CD4-positive, alpha-beta memory T cell (primary cell): ENCODE measurements at regions of chr3 and their contacts with region 1.

Region 1: DNA sequence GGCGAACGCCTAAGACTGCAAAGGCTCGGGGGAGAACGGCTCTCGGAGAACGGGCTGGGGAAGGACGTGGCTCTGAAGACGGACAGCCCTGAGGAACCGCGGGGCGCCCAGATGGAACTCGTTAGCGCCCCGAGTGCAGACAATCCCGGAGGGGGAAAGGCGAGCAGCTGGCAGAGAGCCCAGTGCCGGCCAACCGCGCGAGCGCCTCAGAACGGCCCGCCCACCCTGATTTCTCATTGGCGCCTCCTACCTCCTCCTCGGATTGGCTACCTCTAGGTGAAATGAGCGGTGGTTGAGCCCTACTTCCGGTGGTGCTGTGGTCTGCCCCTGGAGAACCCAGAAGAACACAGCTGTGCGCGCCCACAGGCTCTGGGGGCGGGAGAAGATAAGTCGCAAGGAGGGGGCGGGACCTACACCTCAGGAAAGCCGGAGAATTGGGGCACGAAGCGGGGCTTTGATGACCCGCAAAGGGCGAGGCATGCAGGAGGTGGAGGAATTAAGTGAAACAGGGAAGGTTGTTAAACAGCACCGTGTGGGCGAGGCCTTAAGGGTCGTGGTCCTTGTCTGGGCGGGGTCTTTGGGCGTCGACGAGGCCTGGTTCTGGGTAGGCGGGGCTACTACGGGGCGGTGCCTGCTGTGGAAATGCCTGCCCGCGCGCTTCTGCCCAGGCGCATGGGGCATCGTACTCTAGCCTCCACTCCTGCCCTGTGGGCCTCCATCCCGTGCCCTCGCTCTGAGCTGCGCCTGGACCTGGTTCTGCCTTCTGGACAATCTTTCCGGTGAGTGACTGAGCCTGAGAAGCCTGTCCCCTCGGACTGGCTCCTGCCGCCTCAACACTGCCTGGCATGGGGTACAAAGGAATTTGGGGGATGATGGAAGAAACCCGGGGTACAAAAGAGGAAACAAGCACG is at the start of gene OGG1:
- DNase-seq: peak; percentile 95 to 98 (median 96)
- H3K4me3 ChIP-seq: peak within 1 kb of the TSS; percentile 58 to 92
- H3K4me3 Mint-ChIP-seq: peak within 1 kb of the TSS; percentile 88 to 98 (median 96)
- H3K27ac ChIP-seq: peak within 1 kb of the TSS; percentile 59
- H3K27ac Mint-ChIP-seq: peak within 1 kb of the TSS; percentile 93 to 98 (median 95)
- H3K4me1 ChIP-seq: peaks cover 38% of the 10 kb centered on the region
- H3K4me1 Mint-ChIP-seq: peaks cover 25 to 54% (median 39%) of the 10 kb centered on the region in 4 donors
- H3K27me3 ChIP-seq: no peaks in the 10 kb centered on the region
- H3K27me3 Mint-ChIP-seq: no peaks in the 10 kb centered on the region
- total RNA-seq, gene OGG1: 40.4 to 46.9 TPM

Region 2: GRCh38 chr3:9769426-9770275 is 19.8 kb after region 1 on chr3 and contains the start of gene CAMK1:
- CTCF ChIA-PET with region 1: interaction called, 4 read pairs
- POLR2A ChIA-PET with region 1: interaction called, 20 read pairs
- intact Hi-C with region 1: no loop called
- DNase-seq: peak in 4 of 5 donors; percentile 42 to 56 (median 47)
- H3K4me3 ChIP-seq: peak within 1 kb of the TSS in 1 of 2 donors; percentile 45
- H3K4me3 Mint-ChIP-seq: peak within 1 kb of the TSS; percentile 66 to 77 (median 76)
- H3K27ac ChIP-seq: no peak within 1 kb of the TSS
- H3K27ac Mint-ChIP-seq: peak within 1 kb of the TSS in 5 of 7 donors; percentile 66 to 91 (median 76)
- H3K4me1 ChIP-seq: peaks cover 21% of the 10 kb centered on the region
- H3K4me1 Mint-ChIP-seq: peaks cover 12 to 36% (median 21%) of the 10 kb centered on the region in 4 donors
- H3K27me3 ChIP-seq: no peaks in the 10 kb centered on the region
- H3K27me3 Mint-ChIP-seq: no peaks in the 10 kb centered on the region
- total RNA-seq, gene CAMK1: 2.1 to 2.6 TPM

Region 3: GRCh38 chr3:9884555-9885165 is 134.8 kb after region 1 on chr3:
- CTCF ChIA-PET with region 1: no interaction called
- POLR2A ChIA-PET with region 1: no interaction called
- intact Hi-C with region 1: no loop called
- DNase-seq: no peak
- H3K4me3 ChIP-seq: no peak overlapping the region
- H3K4me3 Mint-ChIP-seq: no peak overlapping the region
- H3K27ac ChIP-seq: no peak overlapping the region
- H3K27ac Mint-ChIP-seq: no peak overlapping the region
- H3K4me1 ChIP-seq: peaks cover under 1% of the 10 kb centered on the region
- H3K4me1 Mint-ChIP-seq: peaks cover 0 to 2% (median 0%) of the 10 kb centered on the region in 4 donors
- H3K27me3 ChIP-seq: no peaks in the 10 kb centered on the region
- H3K27me3 Mint-ChIP-seq: peaks cover 0 to 2% of the 10 kb centered on the region in 2 donors